ENCODE measurements at regions of chr2 and their contacts with region 1.

Region 1: DNA sequence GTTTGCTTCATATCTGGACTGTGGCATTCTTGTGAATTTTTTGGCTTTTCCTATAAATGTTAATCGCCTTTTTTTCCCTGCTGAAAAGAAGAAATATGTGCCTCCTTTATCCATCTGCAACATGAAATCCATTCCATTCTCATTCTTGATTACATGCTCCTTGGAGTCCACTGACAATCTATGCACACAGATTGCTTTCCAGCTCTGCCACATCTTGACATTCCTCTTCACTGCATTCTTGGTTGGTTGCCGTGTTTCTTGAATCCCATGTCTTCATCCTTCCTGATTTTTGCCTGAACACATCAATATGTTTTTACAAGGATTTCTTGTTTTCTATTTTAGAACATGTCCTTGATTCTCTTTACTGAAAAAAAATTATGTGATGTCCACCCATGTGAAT is 26.7 kb upstream of the BIRC6 start:
- DNase-seq: no peak
- H3K4me3 ChIP-seq: no peak overlapping the region
- H3K27ac ChIP-seq: no peak overlapping the region
- H3K4me1 ChIP-seq: no peaks in the 10 kb centered on the region
- H3K27me3 ChIP-seq: no peaks in the 10 kb centered on the region
- CTCF ChIP-seq: no peak
- EP300 ChIP-seq: no peak
- POLR2A ChIP-seq: no peak
- RAD21 ChIP-seq: no peak

Region 2: GRCh38 chr2:32314886-32315285 is 15.2 kb before region 1 on chr2:
- CTCF ChIA-PET with region 1: interaction called, 10 read pairs
- POLR2A ChIA-PET with region 1: interaction called, 6 read pairs
- DNase-seq: no peak
- H3K4me3 ChIP-seq: no peak overlapping the region
- H3K27ac ChIP-seq: no peak overlapping the region
- H3K4me1 ChIP-seq: no peaks in the 10 kb centered on the region
- H3K27me3 ChIP-seq: no peaks in the 10 kb centered on the region
- CTCF ChIP-seq: no peak
- EP300 ChIP-seq: no peak
- POLR2A ChIP-seq: no peak
- RAD21 ChIP-seq: no peak

Region 3: GRCh38 chr2:32403782-32404181 is 73.6 kb after region 1 on chr2:
- CTCF ChIA-PET with region 1: no interaction called
- POLR2A ChIA-PET with region 1: no interaction called
- DNase-seq: no peak
- H3K4me3 ChIP-seq: no peak overlapping the region
- H3K27ac ChIP-seq: no peak overlapping the region
- H3K4me1 ChIP-seq: no peaks in the 10 kb centered on the region
- H3K27me3 ChIP-seq: no peaks in the 10 kb centered on the region
- CTCF ChIP-seq: no peak
- EP300 ChIP-seq: no peak
- POLR2A ChIP-seq: no peak
- RAD21 ChIP-seq: no peak

Region 4: GRCh38 chr2:32559136-32559535 is 229.0 kb after region 1 on chr2:
- CTCF ChIA-PET with region 1: no interaction called
- POLR2A ChIA-PET with region 1: no interaction called
- DNase-seq: no peak
- H3K4me3 ChIP-seq: no peak overlapping the region
- H3K27ac ChIP-seq: no peak overlapping the region
- H3K4me1 ChIP-seq: no peaks in the 10 kb centered on the region
- H3K27me3 ChIP-seq: no peaks in the 10 kb centered on the region
- CTCF ChIP-seq: no peak
- EP300 ChIP-seq: no peak
- POLR2A ChIP-seq: no peak
- RAD21 ChIP-seq: no peak

Measured in H1 (cell line).